A549 (cell line): ENCODE measurements at regions of chr1 and their contacts with region 1.

Region 1: DNA sequence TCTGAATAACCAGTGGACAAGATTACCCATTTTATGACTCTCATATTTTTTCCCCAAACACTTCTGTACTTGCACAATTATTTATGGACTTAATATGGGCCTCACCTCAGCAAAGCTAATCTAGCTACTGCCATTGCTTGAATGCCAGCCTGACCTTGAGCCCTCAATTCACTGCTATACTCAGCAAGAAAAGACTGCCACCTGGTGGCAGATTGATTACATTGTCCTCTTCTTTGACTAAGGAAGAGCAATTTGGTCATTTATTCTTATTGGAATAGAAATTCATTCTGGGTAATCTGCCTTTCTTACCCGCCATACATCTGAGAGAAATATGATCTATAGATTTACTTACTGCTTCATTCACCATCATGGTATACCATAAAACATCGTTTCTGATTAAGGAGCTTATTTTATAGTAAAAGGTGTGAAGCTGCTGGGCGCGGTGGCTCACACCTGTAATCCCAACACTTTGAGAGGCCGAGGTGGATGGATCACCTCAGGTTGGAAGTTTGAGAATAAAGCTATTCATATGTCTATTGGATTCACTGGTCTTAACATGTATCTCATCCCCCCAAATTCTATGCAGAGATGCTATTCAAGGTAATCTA is 32.9 kb upstream of the DIPK1A start:
- DNase-seq: peak; percentile 40 to 74
- ATAC-seq: peak; percentile 83 to 90
- H3K4me3 ChIP-seq: no peak overlapping the region
- H3K27ac ChIP-seq: no peak overlapping the region
- H3K4me1 ChIP-seq: peaks cover 15% of the 10 kb centered on the region
- CTCF ChIP-seq: peak; percentile 85
- EP300 ChIP-seq: no peak
- POLR2A ChIP-seq: no peak
- RAD21 ChIP-seq: peak; percentile 85

Region 2: GRCh38 chr1:92851729-92852128 is 142.5 kb before region 1 on chr1:
- CTCF ChIA-PET with region 1: interaction called, 64 read pairs
- POLR2A ChIA-PET with region 1: no interaction called
- DNase-seq: no peak
- ATAC-seq: no peak
- H3K4me3 ChIP-seq: no peak overlapping the region
- H3K27ac ChIP-seq: no peak overlapping the region
- H3K4me1 ChIP-seq: no peaks in the 10 kb centered on the region
- CTCF ChIP-seq: no peak
- EP300 ChIP-seq: no peak
- POLR2A ChIP-seq: no peak
- RAD21 ChIP-seq: no peak

Region 3: GRCh38 chr1:92870591-92870990 is 123.6 kb before region 1 on chr1:
- CTCF ChIA-PET with region 1: interaction called, 22 read pairs
- POLR2A ChIA-PET with region 1: no interaction called
- DNase-seq: no peak
- ATAC-seq: no peak
- H3K4me3 ChIP-seq: no peak overlapping the region
- H3K27ac ChIP-seq: no peak overlapping the region
- H3K4me1 ChIP-seq: no peaks in the 10 kb centered on the region
- CTCF ChIP-seq: no peak
- EP300 ChIP-seq: no peak
- POLR2A ChIP-seq: no peak
- RAD21 ChIP-seq: no peak

Region 4: GRCh38 chr1:92960395-92961130 is 33.6 kb before region 1 on chr1:
- CTCF ChIA-PET with region 1: interaction called, 69 read pairs
- POLR2A ChIA-PET with region 1: interaction called, 6 read pairs
- DNase-seq: peak; percentile 74 to 80
- ATAC-seq: peak; percentile 76 to 85
- H3K4me3 ChIP-seq: peak overlapping the region; percentile 97
- H3K27ac ChIP-seq: peak overlapping the region; percentile 98 to 99
- H3K4me1 ChIP-seq: peaks cover 30% of the 10 kb centered on the region
- CTCF ChIP-seq: peak; percentile 57
- EP300 ChIP-seq: no peak
- POLR2A ChIP-seq: no peak
- RAD21 ChIP-seq: peak; percentile 75 to 80

Region 5: GRCh38 chr1:92975551-92976232 is 18.5 kb before region 1 on chr1:
- CTCF ChIA-PET with region 1: interaction called, 50 read pairs
- POLR2A ChIA-PET with region 1: no interaction called
- DNase-seq: no peak
- ATAC-seq: no peak
- H3K4me3 ChIP-seq: no peak overlapping the region
- H3K27ac ChIP-seq: no peak overlapping the region
- H3K4me1 ChIP-seq: no peaks in the 10 kb centered on the region
- CTCF ChIP-seq: no peak
- EP300 ChIP-seq: no peak
- POLR2A ChIP-seq: no peak
- RAD21 ChIP-seq: no peak

Region 6: DNA sequence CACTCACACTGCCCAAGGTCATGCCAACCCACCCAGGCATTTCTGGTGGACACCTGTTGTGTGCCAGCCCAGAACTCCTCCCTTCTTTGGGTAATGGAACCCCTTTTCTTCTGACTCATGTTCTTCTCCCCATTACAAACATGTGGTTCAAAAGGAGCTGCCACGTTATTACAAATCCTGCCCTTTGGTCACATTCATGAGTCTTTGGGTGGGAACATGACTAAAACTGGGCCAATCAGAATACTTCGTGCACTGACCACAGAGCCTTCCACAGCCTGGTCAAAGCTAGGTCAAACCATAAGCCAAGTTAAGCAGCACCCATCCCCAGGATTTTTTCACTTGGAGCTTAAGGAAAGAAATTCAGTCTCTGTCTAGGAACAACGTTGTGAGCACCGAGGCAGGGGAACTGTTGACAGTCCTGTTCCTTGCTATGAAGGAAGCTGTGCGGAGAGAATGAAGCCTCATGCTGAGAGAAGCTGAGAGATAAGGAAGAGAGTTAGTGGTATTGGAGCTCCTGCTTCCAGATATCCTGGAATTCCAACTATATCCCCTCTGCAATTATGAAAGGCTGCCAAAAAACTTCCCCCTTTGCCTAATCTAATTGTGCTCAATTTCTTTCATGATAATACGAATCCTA is 13.8 kb after region 1 on chr1:
- CTCF ChIA-PET with region 1: interaction called, 36 read pairs
- POLR2A ChIA-PET with region 1: no interaction called
- DNase-seq: no peak
- ATAC-seq: no peak
- H3K4me3 ChIP-seq: no peak overlapping the region
- H3K27ac ChIP-seq: no peak overlapping the region
- H3K4me1 ChIP-seq: no peaks in the 10 kb centered on the region
- CTCF ChIP-seq: no peak
- EP300 ChIP-seq: no peak
- POLR2A ChIP-seq: no peak
- RAD21 ChIP-seq: no peak

Region 7: GRCh38 chr1:93061895-93062792 is 67.9 kb after region 1 on chr1:
- CTCF ChIA-PET with region 1: interaction called, 10 read pairs
- POLR2A ChIA-PET with region 1: no interaction called
- DNase-seq: peak in 1 of 2 experiments; percentile 32
- ATAC-seq: peak; percentile 76 to 83; a peak in 5 of 6 replicates
- H3K4me3 ChIP-seq: no peak overlapping the region
- H3K27ac ChIP-seq: no peak overlapping the region
- H3K4me1 ChIP-seq: no peaks in the 10 kb centered on the region
- CTCF ChIP-seq: peak; percentile 54
- EP300 ChIP-seq: no peak
- POLR2A ChIP-seq: no peak
- RAD21 ChIP-seq: peak; percentile 59 to 65